Aorta (tissue), 5 donors: ENCODE measurements at regions of chr18 and their contacts with region 1.

Region 1: GRCh38 chr18:12883684-12884405 is at the start of gene PTPN2:
- DNase-seq: peak; percentile 98
- ATAC-seq: peak; percentile 96
- H3K4me3 ChIP-seq: peak within 1 kb of the TSS; percentile 68 to 98
- H3K27ac ChIP-seq: peak within 1 kb of the TSS; percentile 85 to 100
- H3K4me1 ChIP-seq: peaks cover 0 to 2% of the 10 kb centered on the region in 2 donors
- H3K27me3 ChIP-seq: no peaks in the 10 kb centered on the region
- total RNA-seq, gene PTPN2: 37.2 to 52.9 TPM

Region 2: DNA sequence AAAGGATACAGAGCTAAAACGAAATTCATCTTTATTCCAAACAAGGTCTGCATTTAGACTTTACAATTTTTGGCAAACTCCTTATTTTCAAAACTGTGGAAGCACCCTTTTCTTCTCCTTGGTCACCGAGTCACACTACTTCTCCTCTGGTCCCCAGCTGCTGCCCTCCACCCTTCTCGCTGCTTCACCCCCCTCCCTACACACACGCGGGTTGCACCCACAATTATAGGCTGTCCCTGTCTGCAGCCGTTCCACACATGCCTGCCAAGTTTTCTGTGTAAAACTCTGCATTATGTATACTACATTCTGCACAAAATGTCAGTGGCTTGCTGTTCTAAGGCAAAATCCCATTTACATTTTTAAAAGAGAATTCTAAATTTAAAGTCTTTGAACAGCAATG is 63.3 kb before region 1 on chr18:
- intact Hi-C with region 1: loop called in 1 of 2 experiments (anchors 10 kb)
- DNase-seq: no peak
- ATAC-seq: no peak
- H3K4me3 ChIP-seq: no peak overlapping the region
- H3K27ac ChIP-seq: no peak overlapping the region
- H3K4me1 ChIP-seq: no peaks in the 10 kb centered on the region
- H3K27me3 ChIP-seq: no peaks in the 10 kb centered on the region

Region 3: DNA sequence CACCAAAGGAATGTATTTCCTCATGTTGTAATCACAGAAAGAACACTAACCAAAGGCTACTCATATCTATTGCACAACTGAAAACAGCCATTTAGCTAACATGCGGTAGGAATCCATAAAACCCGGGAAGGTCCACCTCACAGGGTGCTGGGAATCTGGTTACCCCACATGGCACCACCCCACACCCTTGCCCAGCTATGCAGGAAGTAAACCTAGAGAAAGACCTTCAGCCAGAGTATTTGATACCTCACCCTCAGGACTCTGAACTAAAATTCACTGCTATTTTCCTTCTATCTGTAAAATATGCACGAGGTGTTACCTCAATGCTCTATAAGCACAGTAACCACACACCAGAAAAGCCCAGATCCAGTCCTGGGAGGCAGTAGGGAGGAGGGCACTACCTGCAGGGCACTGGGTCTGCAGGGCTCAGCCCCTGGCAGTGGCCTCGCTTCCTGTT is 45.6 kb before region 1 on chr18:
- intact Hi-C with region 1: loop called in 1 of 2 experiments (anchors 10 kb)
- DNase-seq: peak in 1 of 2 donors; percentile 55
- ATAC-seq: peak; percentile 79
- H3K4me3 ChIP-seq: no peak overlapping the region
- H3K27ac ChIP-seq: peak overlapping the region in 1 of 2 donors; percentile 78
- H3K4me1 ChIP-seq: peaks cover 2% of the 10 kb centered on the region in 2 donors
- H3K27me3 ChIP-seq: no peaks in the 10 kb centered on the region